Calu3 (cell line): ENCODE measurements at regions of chr1 and their contacts with region 1.

Region 1: DNA sequence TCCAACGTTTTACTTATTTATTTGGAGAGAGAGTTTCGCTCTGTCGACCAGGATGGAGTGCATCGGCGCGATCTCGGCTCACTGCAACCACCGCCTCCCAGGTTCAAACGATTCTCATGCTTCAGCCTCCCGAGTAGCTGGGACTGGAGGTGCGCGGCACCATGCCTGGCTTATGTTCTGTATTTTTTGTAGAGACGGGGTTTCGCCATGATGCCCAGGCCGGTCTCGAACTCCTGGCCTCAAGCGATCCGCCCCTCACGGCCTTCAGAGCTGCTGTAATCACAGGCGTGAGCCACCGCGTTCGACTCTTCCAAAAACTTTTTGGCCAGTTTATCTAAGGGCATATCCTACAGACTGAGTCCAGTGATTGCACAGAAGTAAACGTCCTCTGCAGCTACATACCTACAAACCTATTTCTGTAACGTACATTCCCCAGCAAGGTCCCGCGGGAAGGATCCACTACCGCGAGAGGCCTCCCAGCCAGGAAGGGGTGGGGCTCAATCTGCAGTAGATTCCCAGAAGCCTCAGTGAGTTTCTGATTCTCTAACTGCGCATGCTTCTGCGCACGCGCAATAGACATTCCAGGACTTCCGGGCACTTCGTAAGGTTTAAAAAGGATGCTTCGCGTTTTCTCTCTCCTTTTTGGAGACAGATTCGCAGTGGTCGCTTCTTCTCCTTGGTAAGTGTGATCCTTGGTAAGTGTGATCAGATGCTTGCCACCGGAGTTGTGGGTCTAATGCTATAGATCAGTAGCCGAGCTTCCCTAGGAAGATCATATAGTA is at the start of gene RCC1:
- DNase-seq: peak; percentile 96
- H3K4me3 Mint-ChIP-seq: peak within 1 kb of the TSS; percentile 96
- H3K27ac Mint-ChIP-seq: peak within 1 kb of the TSS; percentile 98
- H3K4me1 Mint-ChIP-seq: peaks cover 38% of the 10 kb centered on the region
- H3K27me3 Mint-ChIP-seq: no peaks in the 10 kb centered on the region
- CTCF ChIP-seq: no peak
- total RNA-seq, gene RCC1: 95.3 and 95.9 TPM in 2 replicates

Region 2: GRCh38 chr1:28417429-28417922 is 88.1 kb before region 1 on chr1:
- CTCF ChIA-PET with region 1: no interaction called
- intact Hi-C with region 1: loop called (anchors 10 kb)
- DNase-seq: peak; percentile 63
- H3K4me3 Mint-ChIP-seq: no peak overlapping the region
- H3K27ac Mint-ChIP-seq: peak overlapping the region; percentile 91
- H3K4me1 Mint-ChIP-seq: peaks cover 31% of the 10 kb centered on the region
- H3K27me3 Mint-ChIP-seq: no peaks in the 10 kb centered on the region
- CTCF ChIP-seq: no peak

Region 3: GRCh38 chr1:28581536-28582247 is 76.1 kb after region 1 on chr1:
- CTCF ChIA-PET with region 1: interaction called, 4 read pairs
- intact Hi-C with region 1: loop called (anchors 5 kb)
- DNase-seq: peak; percentile 96
- H3K4me3 Mint-ChIP-seq: peak overlapping the region; percentile 95
- H3K27ac Mint-ChIP-seq: peak overlapping the region; percentile 93
- H3K4me1 Mint-ChIP-seq: peaks cover 32% of the 10 kb centered on the region
- H3K27me3 Mint-ChIP-seq: no peaks in the 10 kb centered on the region
- CTCF ChIP-seq: no peak